ENCODE measurements at regions of chr2 and their contacts with region 1.

Region 1: DNA sequence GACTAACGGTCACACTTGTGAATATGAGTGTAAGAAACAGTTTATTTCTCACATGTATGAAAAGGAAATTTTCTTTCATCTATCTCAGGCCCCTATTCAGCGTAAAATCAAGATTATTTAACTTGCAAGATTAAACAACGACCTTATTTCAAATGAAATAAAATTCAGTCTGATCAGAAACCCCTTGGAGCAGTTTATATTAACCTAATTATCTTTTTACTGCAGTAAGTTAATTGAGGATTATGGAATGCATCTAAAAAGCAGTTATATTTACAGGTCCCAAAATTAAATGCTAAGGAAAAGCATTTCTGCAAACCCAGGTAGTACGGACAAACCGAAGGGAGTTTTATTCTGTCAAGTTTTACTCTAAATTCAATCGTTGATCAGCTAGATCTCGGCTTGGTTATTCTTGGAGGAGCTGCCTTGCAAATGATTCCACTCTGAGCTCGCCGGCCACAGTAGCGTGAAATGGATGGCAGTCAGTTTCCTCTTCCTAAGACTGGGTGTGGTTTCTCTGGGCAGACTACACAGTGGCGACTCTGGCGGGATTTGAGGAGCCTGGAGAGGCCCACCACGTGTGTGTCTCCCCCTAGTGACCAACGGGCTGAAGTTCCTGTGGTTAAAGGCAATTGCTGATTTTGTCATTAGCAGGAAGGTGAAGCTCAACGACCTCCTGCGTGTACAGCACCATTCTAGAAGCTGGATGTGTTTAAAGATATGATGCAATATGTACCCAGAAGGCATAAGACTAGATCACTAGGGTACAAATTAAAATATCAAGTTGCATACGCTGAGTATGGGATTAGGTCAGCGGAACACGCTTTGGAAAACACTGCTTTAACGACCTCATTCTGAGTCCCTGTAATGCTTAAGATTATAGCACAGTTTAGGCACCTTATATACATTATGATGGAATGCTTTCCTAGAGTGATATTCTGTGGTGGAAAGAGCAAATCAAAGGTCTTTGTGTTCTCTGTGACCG is 36.4 kb downstream of the PRKRA start:
- DNase-seq: peak; percentile 89
- H3K4me3 Mint-ChIP-seq: peak overlapping the region; percentile 79
- H3K27ac Mint-ChIP-seq: peak overlapping the region; percentile 86
- H3K4me1 Mint-ChIP-seq: peaks cover 64% of the 10 kb centered on the region
- H3K27me3 Mint-ChIP-seq: peaks cover 3% of the 10 kb centered on the region

Region 2: GRCh38 chr2:177952151-177952550 is 462.4 kb before region 1 on chr2:
- CTCF ChIA-PET with region 1: no interaction called
- POLR2A ChIA-PET with region 1: no interaction called
- DNase-seq: no peak
- H3K4me3 Mint-ChIP-seq: no peak overlapping the region
- H3K27ac Mint-ChIP-seq: no peak overlapping the region
- H3K4me1 Mint-ChIP-seq: no peaks in the 10 kb centered on the region
- H3K27me3 Mint-ChIP-seq: no peaks in the 10 kb centered on the region

Region 3: GRCh38 chr2:178306352-178307073 is 108.0 kb before region 1 on chr2:
- CTCF ChIA-PET with region 1: interaction called, 16 read pairs
- POLR2A ChIA-PET with region 1: no interaction called
- DNase-seq: peak; percentile 57
- H3K4me3 Mint-ChIP-seq: no peak overlapping the region
- H3K27ac Mint-ChIP-seq: no peak overlapping the region
- H3K4me1 Mint-ChIP-seq: no peaks in the 10 kb centered on the region
- H3K27me3 Mint-ChIP-seq: peaks cover 39% of the 10 kb centered on the region

Region 4: GRCh38 chr2:178404368-178404767 is 10.2 kb before region 1 on chr2:
- CTCF ChIA-PET with region 1: interaction called, 342 read pairs
- POLR2A ChIA-PET with region 1: interaction called, 155 read pairs
- DNase-seq: peak; percentile 81
- H3K4me3 Mint-ChIP-seq: peak overlapping the region; percentile 48
- H3K27ac Mint-ChIP-seq: peak overlapping the region; percentile 93
- H3K4me1 Mint-ChIP-seq: peaks cover 43% of the 10 kb centered on the region
- H3K27me3 Mint-ChIP-seq: no peaks in the 10 kb centered on the region

Region 5: DNA sequence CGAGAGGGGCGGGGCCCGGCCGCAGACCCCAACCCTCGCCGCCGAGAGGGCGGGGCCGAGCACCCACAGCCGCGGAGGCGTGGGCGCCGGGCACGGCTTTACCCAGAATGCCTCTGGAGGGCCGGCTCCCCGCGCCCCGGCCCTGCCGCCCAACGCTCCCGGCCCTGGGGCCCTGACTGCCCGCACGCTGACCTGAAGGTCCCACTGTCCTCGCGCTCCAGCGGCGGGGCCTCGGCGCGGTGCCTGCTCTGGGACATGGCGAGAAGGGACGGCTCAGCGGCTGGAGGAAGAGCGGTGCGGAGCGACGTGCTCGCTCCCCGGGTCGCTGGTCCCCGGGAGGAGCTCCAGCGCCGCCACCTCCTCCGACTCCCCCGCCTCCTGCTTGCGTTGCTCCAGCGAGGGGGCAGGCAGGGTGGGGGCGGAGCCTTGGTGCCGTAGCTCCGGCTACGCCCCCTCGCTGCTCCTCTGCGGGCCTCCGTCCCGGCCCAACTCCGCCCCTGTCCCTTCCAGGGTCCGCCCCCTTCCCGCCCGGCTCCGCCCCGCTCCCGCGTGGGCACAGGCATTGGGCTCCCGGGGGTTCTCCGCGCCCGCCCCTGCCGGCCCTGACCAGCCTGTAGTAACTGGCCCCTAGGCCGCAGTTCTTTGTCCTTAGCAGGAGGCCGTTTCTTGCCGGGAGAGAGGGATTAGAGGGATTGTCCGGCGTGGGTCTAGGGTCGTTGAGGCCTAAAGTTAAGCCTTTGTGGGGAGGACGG is 36.4 kb after region 1 on chr2 and contains the starts of genes PJVK and PRKRA:
- CTCF ChIA-PET with region 1: interaction called, 24 read pairs
- POLR2A ChIA-PET with region 1: interaction called, 78 read pairs
- DNase-seq: peak; percentile 95
- H3K4me3 Mint-ChIP-seq: peak within 1 kb of the TSS; percentile 83
- H3K27ac Mint-ChIP-seq: peak within 1 kb of the TSS; percentile 87
- H3K4me1 Mint-ChIP-seq: peaks cover 30% of the 10 kb centered on the region
- H3K27me3 Mint-ChIP-seq: peaks cover 5% of the 10 kb centered on the region
- total RNA-seq, gene PJVK: 0.91 to 1.1 TPM
- total RNA-seq, gene PRKRA: 35.4 to 36.5 TPM

Region 6: DNA sequence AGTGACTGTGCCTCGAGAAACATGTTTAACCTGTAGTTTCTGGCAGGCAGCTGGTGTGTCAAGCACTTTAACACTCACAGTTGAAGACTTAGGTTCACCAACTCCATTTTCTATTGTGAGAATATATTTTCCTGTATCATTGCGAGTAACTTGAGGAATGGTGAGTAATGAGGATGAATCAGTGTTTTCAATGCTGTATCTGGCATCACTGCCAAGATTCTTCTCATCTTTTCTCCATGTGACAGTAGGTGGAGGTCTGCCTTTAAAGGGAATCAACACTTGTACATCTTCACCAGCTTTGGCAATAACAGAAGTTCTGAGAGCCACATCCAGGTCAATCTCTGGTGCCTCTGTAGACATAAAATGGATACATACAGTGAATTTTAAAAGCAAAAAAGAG is 138.5 kb after region 1 on chr2:
- CTCF ChIA-PET with region 1: no interaction called
- POLR2A ChIA-PET with region 1: no interaction called
- DNase-seq: no peak
- H3K4me3 Mint-ChIP-seq: no peak overlapping the region
- H3K27ac Mint-ChIP-seq: no peak overlapping the region
- H3K4me1 Mint-ChIP-seq: peaks cover 2% of the 10 kb centered on the region
- H3K27me3 Mint-ChIP-seq: no peaks in the 10 kb centered on the region

Measured in activated CD4-positive, alpha-beta memory T cell treated with anti-CD3 and anti-CD28 coated beads, Interleukin-2, amount 10 ng/mL, durations not matched to agents 7 days and 5 days (primary cell).